Activated B cell treated with CpG ODN at 0.5 μM for 24 hours (primary cell): ENCODE measurements at regions of chr3 and their contacts with region 1.

Region 1: GRCh38 chr3:71160800-71161546 is 422.6 kb downstream of the FOXP1 start:
- DNase-seq: no peak
- ATAC-seq: no peak
- H3K4me3 Mint-ChIP-seq: no peak overlapping the region
- H3K27ac Mint-ChIP-seq: peak overlapping the region; percentile 63
- H3K4me1 Mint-ChIP-seq: peaks cover 59% of the 10 kb centered on the region
- H3K27me3 Mint-ChIP-seq: no peaks in the 10 kb centered on the region
- CTCF ChIP-seq: no peak

Region 2: DNA sequence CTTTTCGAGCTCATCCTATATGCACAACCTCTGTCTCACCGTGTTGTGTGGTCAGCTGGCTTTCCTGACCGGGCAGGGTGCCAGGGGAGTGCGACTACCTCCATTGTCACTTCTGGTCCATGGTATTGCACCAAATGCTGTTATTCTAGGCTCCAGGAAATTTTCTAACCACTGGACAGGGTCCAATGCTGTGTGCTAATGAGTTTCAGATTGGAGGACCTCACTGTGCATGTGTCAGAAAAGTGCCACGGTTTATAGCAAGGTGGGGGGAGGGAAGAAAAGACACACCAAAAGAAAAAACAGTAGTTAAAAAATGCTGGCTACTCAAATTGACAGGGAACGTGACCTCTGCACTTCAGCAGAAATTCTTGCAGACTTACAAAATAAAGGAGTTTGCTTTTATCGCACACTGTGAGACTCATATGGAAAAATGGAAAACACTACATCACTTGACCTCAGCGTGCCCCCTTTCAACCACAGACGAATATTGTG is 57.5 kb before region 1 on chr3:
- CTCF ChIA-PET with region 1: no interaction called
- POLR2A ChIA-PET with region 1: no interaction called
- intact Hi-C with region 1: no loop called
- DNase-seq: no peak
- ATAC-seq: no peak
- H3K4me3 Mint-ChIP-seq: no peak overlapping the region
- H3K27ac Mint-ChIP-seq: peak overlapping the region; percentile 71
- H3K4me1 Mint-ChIP-seq: peaks cover 94% of the 10 kb centered on the region
- H3K27me3 Mint-ChIP-seq: no peaks in the 10 kb centered on the region
- CTCF ChIP-seq: no peak

Region 3: DNA sequence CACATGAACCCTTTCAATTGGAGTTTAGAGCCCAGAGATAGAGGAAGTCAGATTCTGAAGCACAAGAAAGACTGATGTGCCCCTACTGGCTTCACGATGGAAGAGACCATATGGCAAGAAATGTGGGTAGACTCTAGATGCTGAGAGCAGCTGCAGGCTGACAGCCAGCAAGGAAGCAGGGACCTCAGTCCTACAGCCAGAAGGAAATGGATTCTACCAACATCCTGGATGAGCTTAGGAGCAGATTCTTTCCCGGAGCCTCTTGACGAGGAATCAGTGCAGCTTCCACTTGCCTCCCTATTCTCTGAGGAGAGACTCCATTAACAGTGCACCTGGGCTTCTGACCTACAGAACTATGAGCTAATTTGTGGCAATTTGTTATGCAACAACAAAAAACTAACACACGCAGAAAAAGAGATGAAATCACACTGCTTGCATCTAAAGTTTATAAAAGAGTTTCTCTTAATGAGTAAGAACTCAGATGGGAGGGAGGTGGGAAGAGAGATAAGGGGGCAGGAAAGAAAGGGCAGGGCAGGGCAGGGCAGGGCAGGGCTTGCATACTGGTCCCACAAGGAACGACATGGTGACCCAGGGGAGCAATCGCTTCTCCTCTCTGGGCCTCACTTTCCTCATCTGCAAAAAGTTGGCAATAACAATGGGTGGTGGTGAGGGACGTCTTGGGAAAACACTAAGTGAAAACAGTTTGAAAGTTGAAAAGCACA is 18.4 kb before region 1 on chr3:
- CTCF ChIA-PET with region 1: no interaction called
- POLR2A ChIA-PET with region 1: interaction called, 10 read pairs
- intact Hi-C with region 1: no loop called
- DNase-seq: no peak
- ATAC-seq: peak; percentile 72
- H3K4me3 Mint-ChIP-seq: no peak overlapping the region
- H3K27ac Mint-ChIP-seq: peak overlapping the region; percentile 74
- H3K4me1 Mint-ChIP-seq: peaks cover 39% of the 10 kb centered on the region
- H3K27me3 Mint-ChIP-seq: no peaks in the 10 kb centered on the region
- CTCF ChIP-seq: no peak